PC-9 (cell line): ENCODE measurements at regions of chr7 and their contacts with region 1.

Region 1: DNA sequence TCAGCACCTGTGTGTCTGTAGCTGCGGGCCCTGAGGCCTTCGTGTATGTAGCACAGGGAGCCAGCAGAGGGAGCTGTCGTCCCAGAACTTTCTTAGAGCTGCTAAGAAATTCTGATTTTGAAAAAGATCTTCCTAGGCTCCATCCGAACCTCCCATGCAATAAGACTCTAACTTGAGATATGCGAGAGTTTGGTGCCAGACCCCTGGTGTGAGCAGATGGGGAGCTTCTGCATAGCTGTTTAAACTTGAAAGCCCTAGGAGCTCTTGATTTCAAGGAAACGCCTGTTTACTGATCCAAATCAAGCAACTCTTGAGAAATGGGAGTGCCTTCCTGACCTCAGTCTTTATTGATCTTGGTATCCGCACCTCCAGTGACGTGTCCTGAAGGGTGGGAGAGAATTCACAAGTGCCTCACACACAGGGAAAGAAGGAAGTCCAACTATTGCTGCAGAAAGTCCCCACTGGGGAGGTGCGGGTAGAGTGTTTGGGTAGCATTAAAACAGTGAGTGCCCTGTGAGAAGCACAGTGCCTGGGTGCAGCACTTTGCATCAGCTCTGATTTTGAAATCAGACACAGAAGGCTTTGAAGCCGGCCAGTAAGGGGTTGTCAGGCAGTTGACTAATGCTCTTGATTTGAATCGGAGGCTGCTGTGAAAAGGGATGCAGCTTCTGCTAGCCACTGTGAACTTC is 66.4 kb upstream of the STRIP2 start:
- DNase-seq: peak; percentile 76 to 98
- H3K4me3 ChIP-seq: peak overlapping the region; percentile 76
- H3K27ac ChIP-seq: peak overlapping the region; percentile 97
- H3K4me1 ChIP-seq: peaks cover 36% of the 10 kb centered on the region
- H3K27me3 ChIP-seq: no peaks in the 10 kb centered on the region
- CTCF ChIP-seq: peak; percentile 94

Region 2: GRCh38 chr7:129343099-129343700 is 24.6 kb before region 1 on chr7:
- CTCF ChIA-PET with region 1: interaction called, 5 read pairs
- POLR2A ChIA-PET with region 1: no interaction called
- intact Hi-C with region 1: loop called (anchors 2 kb)
- DNase-seq: peak; percentile 9 to 52
- H3K4me3 ChIP-seq: no peak overlapping the region
- H3K27ac ChIP-seq: no peak overlapping the region
- H3K4me1 ChIP-seq: peaks cover 8% of the 10 kb centered on the region
- H3K27me3 ChIP-seq: no peaks in the 10 kb centered on the region
- CTCF ChIP-seq: peak; percentile 85

Region 3: GRCh38 chr7:129401967-129402860 is 34.4 kb after region 1 on chr7:
- CTCF ChIA-PET with region 1: interaction called, 10 read pairs
- POLR2A ChIA-PET with region 1: no interaction called
- intact Hi-C with region 1: no loop called
- DNase-seq: no peak
- H3K4me3 ChIP-seq: no peak overlapping the region
- H3K27ac ChIP-seq: peak overlapping the region; percentile 41; the same call in 1 of the 2 replicates
- H3K4me1 ChIP-seq: peaks cover 30% of the 10 kb centered on the region
- H3K27me3 ChIP-seq: no peaks in the 10 kb centered on the region
- CTCF ChIP-seq: 0 out of 2 replicates have a peak, but pooled peaks have one; percentile 29

Region 4: GRCh38 chr7:129412501-129412900 is 44.7 kb after region 1 on chr7:
- CTCF ChIA-PET with region 1: no interaction called
- POLR2A ChIA-PET with region 1: no interaction called
- intact Hi-C with region 1: no loop called
- DNase-seq: no peak
- H3K4me3 ChIP-seq: no peak overlapping the region
- H3K27ac ChIP-seq: no peak overlapping the region
- H3K4me1 ChIP-seq: no peaks in the 10 kb centered on the region
- H3K27me3 ChIP-seq: no peaks in the 10 kb centered on the region
- CTCF ChIP-seq: no peak

Region 5: GRCh38 chr7:129468087-129468486 is 100.2 kb after region 1 on chr7:
- CTCF ChIA-PET with region 1: interaction called, 29 read pairs
- POLR2A ChIA-PET with region 1: no interaction called
- intact Hi-C with region 1: loop called (anchors 1 kb)
- DNase-seq: peak in 1 of 2 experiments; percentile 92
- H3K4me3 ChIP-seq: no peak overlapping the region
- H3K27ac ChIP-seq: peak overlapping the region; percentile 80
- H3K4me1 ChIP-seq: peaks cover 45% of the 10 kb centered on the region
- H3K27me3 ChIP-seq: no peaks in the 10 kb centered on the region
- CTCF ChIP-seq: no peak

Region 6: GRCh38 chr7:129797214-129797789 is 429.5 kb after region 1 on chr7:
- CTCF ChIA-PET with region 1: no interaction called
- POLR2A ChIA-PET with region 1: no interaction called
- intact Hi-C with region 1: no loop called
- DNase-seq: no peak
- H3K4me3 ChIP-seq: no peak overlapping the region
- H3K27ac ChIP-seq: no peak overlapping the region
- H3K4me1 ChIP-seq: no peaks in the 10 kb centered on the region
- H3K27me3 ChIP-seq: no peaks in the 10 kb centered on the region
- CTCF ChIP-seq: no peak

Region 7: DNA sequence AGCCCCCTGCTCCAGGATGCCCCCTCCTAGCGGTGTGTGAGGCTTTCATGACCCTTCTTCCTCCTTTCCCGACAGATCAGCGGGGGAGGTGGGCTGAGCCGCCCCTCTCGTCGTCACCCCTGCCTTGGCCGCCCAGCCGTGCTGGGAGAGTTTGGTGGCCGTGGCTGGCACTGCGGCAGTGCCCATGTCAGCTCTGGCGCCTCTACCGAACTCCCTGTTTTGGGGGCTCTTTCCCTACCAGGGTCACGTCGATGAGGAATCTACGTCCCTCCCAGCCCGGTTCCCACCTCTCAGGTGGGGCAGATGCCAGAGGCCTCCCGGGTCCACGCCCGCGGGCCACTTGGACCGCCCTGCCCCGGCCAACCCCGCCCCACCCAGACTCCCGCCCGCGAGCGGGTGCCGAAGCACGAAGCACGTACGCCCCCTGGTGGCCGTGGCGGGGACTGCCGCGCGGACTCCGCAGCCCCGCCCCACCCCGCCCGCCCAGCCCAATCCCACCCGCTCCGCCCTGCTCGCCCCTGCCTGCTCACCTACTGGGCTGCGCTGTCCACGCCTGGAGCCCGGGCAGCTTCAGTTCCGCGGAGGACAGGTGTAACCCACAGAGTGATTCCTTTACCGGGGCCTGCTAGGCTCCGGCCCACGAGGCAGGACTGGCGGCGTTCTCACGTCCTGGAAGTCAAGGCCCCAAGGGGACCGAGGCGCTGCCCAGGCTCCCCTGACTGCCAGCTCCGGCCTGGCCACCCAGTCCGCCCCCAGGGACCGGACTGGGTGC is 457.8 kb after region 1 on chr7:
- CTCF ChIA-PET with region 1: no interaction called
- POLR2A ChIA-PET with region 1: interaction called, 4 read pairs
- intact Hi-C with region 1: loop called (anchors 1 kb)
- DNase-seq: peak; percentile 70 to 95
- H3K4me3 ChIP-seq: peak overlapping the region; percentile 88
- H3K27ac ChIP-seq: peak overlapping the region; percentile 91
- H3K4me1 ChIP-seq: peaks cover 23% of the 10 kb centered on the region
- H3K27me3 ChIP-seq: no peaks in the 10 kb centered on the region
- CTCF ChIP-seq: peak; percentile 70

Region 8: DNA sequence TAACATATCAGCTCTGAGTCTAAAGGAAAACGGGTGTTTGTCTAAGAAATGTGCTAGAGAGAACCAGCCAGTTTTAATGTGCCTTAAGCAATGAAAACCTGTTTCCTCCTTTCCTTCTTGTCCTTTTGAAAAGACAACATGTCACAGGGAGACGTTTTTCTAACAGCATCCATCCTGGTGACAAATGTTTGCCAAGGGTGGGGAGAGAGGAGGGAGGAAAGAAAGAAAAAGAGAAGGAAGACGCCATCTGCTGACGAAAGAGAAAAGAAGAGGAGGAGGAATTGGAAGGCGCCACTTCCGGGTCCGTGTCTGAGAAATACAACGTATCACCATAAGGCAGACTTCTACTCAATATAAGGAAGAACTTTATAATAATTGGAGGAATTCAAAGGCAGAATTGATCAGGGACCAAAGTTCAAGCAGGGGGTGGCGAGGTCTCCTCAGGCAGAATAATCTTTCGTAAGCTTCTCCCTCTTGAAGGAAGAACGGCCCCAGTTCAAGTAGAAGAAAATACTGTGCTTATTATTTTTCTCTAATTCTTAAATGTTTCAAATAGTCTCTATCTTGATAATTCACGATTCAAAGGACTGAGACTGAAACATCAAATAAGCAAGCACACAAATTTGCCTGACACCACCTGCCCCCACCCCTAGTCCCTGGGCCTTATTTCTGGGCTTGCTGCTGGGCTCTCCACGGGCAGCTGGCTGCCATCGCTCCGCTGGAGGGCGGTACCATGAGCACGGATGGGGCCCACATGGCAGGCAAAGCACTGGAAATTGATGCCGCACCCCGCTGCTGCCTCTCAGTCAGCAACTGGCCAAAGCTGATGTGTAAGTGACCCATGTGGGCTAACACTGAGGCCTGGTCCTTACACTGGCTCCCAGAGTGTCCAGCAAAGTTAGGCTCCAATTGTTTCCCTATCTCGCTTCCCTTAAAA is 1639.8 kb after region 1 on chr7:
- CTCF ChIA-PET with region 1: no interaction called
- POLR2A ChIA-PET with region 1: no interaction called
- intact Hi-C with region 1: no loop called
- DNase-seq: peak; percentile 70 to 97
- H3K4me3 ChIP-seq: no peak overlapping the region
- H3K27ac ChIP-seq: peak overlapping the region; percentile 64
- H3K4me1 ChIP-seq: peaks cover 67% of the 10 kb centered on the region
- H3K27me3 ChIP-seq: no peaks in the 10 kb centered on the region
- CTCF ChIP-seq: peak; percentile 71; the same call in 1 of the 2 replicates